H1 (cell line): ENCODE measurements at regions of chr1 and their contacts with region 1.

Region 1: DNA sequence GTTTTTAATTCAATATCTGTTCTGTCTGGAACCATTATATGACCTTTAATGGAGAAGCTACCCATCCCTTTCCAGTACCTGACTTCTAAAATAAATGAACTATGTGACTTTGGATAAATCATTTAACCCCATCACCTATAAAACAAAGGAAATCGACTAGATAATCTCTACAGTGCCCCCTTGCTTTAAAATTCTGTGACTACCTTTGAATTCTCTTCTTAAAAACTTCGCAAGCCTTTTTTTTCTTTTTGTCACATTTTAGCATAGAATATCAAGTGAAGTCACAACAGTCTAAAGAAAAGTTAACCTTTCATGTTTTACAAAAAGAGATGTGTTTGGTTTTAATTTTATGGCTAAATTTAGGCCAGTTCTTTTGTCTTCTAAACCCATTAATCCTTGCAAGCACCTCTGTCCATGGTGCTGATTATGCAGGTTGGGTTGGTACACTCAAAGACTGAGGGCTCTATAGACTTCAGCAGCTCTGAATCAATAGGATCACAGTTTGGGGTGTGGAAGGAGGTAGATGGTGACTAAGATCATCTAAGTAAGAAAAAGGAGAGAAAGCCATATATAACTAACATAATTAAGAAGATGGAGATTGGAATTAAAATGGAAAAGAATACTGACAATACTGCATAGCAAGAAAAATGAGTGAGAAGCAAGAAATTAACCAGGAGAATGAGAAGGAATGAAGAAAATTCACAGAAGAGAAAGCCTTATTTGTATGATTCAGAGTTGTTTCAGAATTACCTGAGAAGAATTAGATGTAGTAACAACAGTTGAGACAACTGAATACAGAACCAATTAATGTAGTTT is 59.2 kb downstream of the TBX15 start:
- DNase-seq: peak in 1 of 2 experiments; percentile 51
- H3K4me3 ChIP-seq: no peak overlapping the region
- H3K27ac ChIP-seq: no peak overlapping the region
- H3K4me1 ChIP-seq: no peaks in the 10 kb centered on the region; a peak in 1 of 7 replicates
- H3K27me3 ChIP-seq: no peaks in the 10 kb centered on the region
- CTCF ChIP-seq: peak in 1 of 3 experiments; percentile 12; a peak in 2 of 4 replicates
- EP300 ChIP-seq: no peak
- POLR2A ChIP-seq: no peak
- RAD21 ChIP-seq: no peak

Region 2: DNA sequence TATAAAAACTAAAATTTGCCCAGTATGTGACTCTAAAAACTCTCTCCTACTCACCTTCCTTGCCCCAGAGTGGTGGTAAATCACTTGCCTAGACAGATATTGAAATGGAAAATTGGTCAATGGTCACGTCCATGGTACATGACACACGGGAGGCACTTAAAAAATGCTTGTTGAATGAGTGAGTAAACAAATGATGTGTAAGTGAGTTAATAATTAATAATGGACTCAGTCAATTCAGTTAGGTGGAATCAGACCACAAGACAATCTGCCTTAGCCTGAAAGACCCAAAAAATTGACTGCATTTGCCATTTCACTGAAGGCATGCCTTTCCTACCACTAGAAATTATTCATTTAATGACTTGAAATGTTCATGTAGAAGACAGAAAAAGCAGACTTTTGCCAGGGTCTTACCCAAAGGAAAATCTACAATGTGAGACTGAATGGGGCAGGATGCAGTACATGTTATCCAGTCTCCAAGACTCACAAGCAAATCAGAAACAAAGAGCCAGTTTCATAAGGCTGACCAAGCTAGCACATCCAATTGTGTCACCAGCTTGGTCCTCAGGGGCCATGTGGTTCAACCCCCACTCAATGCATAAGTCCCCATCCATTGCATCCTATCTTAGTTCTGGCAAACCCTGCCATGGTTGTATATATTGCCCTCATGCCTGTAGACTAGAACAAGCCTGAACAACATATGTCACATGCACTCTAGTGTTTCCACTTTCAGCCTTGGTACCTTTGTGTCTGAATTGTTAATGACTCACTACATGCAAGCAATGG is 14.4 kb before region 1 on chr1:
- CTCF ChIA-PET with region 1: interaction called, 12 read pairs
- POLR2A ChIA-PET with region 1: no interaction called
- DNase-seq: no peak
- H3K4me3 ChIP-seq: no peak overlapping the region
- H3K27ac ChIP-seq: no peak overlapping the region
- H3K4me1 ChIP-seq: no peaks in the 10 kb centered on the region
- H3K27me3 ChIP-seq: no peaks in the 10 kb centered on the region
- CTCF ChIP-seq: no peak
- EP300 ChIP-seq: no peak
- POLR2A ChIP-seq: no peak
- RAD21 ChIP-seq: no peak